PC-9 (cell line): ENCODE measurements at regions of chr1 and their contacts with region 1.

Region 1: DNA sequence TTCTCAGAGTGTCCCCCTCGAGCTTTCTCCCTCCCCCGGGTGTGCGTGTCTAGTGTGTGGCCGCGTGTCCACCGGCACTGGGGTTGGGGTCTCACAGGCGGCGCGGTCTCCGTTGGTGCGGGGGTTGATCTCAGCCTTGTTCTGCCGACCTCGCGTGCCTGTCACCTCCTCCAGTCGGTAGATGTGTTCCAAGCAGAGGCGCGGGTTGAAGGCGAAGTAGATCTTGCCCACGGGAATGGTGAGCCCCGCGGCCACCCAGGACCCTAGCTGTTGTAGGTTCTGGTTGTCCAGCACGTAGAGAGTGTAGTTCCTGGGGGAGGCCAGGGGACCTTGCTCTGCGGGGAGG is 9.8 kb downstream of the INSRR start:
- DNase-seq: no peak
- H3K4me3 ChIP-seq: no peak overlapping the region
- H3K27ac ChIP-seq: no peak overlapping the region
- H3K4me1 ChIP-seq: no peaks in the 10 kb centered on the region
- H3K27me3 ChIP-seq: peaks cover 17% of the 10 kb centered on the region; the same call in 1 of the 2 replicates
- CTCF ChIP-seq: no peak

Region 2: DNA sequence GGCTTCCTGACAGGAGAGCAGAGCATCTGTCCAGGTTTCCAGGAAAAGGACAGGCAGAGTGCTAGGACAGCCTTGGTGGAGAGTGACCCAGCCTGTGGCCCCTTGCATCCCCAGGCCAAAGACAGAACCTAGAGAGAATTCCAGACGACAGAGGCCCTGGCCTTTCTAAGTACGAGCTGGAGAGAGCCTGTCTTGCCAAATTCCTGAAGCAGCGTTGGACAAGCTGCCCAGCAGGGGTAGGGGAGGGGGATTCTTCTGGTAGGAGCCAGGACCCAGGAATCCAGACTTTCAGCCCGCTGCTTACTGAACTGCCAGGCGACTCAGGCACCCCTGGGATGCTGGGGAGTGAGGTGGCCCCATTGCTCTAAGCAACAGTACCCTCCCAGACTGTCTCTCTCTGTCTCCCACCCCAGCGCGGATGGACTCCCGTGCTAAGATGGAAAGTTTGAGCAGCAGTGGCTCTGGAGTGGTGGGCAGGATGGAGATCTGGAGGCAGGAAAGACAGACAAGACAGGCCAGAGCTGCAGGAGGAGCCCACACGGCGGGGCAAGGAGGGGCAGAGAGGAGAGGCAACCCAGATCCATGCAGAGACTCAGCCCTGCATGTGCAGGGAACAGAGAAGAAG is 35.5 kb after region 1 on chr1:
- CTCF ChIA-PET with region 1: no interaction called
- POLR2A ChIA-PET with region 1: no interaction called
- intact Hi-C with region 1: no loop called
- DNase-seq: no peak
- H3K4me3 ChIP-seq: no peak overlapping the region
- H3K27ac ChIP-seq: no peak overlapping the region
- H3K4me1 ChIP-seq: no peaks in the 10 kb centered on the region
- H3K27me3 ChIP-seq: peaks cover 39% of the 10 kb centered on the region
- CTCF ChIP-seq: no peak

Region 3: GRCh38 chr1:156945881-156946661 is 96.9 kb after region 1 on chr1:
- CTCF ChIA-PET with region 1: interaction called, 11 read pairs
- POLR2A ChIA-PET with region 1: no interaction called
- intact Hi-C with region 1: no loop called
- DNase-seq: peak; percentile 50 to 58
- H3K4me3 ChIP-seq: no peak overlapping the region
- H3K27ac ChIP-seq: no peak overlapping the region
- H3K4me1 ChIP-seq: peaks cover 8% of the 10 kb centered on the region; the same call in 1 of the 2 replicates
- H3K27me3 ChIP-seq: no peaks in the 10 kb centered on the region
- CTCF ChIP-seq: no peak